ENCODE measurements at regions of chr22 and their contacts with region 1.

Region 1: DNA sequence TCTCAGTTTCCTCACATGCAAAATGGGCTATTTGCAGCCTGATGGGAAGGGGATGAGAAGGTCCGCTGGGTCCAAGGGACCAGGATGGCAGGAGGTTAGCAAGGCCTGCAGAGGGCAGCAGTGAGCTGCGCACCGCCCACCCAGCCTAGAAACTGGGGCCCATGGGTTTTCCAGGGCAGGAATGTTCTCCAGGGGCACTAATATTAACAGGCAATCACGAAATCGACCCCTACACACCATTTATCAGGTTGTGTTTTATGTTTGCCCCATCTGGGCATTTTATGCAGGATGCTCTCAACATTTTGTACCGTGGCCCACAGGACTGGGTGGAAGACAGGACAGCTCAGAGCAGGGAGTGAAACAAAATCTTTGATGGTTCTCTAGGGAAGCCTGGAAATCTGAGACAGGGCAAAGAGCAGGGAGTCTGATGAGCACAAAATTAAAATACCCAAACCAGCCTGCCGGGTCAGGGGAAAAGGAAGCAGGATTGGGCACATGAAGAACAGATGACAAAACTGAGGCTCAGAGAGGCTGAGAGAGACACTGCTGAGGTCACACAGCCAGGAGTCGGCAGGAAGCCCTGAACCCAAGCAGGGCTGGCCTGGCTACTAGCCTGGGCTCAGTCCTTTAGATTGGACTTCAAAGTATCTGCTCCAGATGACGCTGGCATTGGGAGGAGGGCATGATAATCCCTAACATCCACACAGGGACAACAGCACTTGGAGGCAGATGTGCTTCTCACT is 1.6 kb upstream of the BCR start:
- DNase-seq: peak; percentile 74
- H3K4me3 Mint-ChIP-seq: peak overlapping the region; percentile 78
- H3K27ac Mint-ChIP-seq: no peak overlapping the region
- H3K4me1 Mint-ChIP-seq: peaks cover 60% of the 10 kb centered on the region
- H3K27me3 Mint-ChIP-seq: peaks cover 19% of the 10 kb centered on the region

Region 2: DNA sequence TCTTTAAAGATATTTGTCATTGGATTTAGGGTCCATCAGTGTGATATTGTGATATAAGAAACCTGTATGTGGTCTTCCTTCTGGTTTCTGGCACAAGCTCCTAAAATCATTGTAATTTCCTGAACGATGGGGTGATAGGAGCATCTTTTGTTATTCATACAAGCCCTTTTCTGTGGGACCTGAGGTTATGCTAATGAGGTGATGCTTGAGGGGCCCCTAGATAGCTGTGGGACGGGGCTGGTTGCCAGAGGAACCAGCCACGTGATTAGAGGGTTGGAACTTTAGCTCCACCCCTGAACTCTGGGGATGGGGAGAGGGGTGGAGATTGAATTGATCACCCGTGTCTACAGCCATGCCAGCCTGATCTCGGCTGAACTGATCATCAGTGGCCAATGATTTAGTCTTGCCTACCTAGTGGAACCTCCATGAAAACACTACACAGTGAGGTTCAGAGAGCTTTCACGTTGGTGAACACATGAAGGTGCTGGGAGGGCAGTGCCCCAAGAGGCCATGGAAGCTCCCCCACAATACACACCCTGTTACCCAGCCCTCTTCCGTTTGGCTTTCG is 64.4 kb after region 1 on chr22:
- CTCF ChIA-PET with region 1: interaction called, 12 read pairs
- DNase-seq: peak; percentile 78
- H3K4me3 Mint-ChIP-seq: peak overlapping the region; percentile 33
- H3K27ac Mint-ChIP-seq: peak overlapping the region; percentile 90
- H3K4me1 Mint-ChIP-seq: peaks cover 83% of the 10 kb centered on the region
- H3K27me3 Mint-ChIP-seq: no peaks in the 10 kb centered on the region

Region 3: DNA sequence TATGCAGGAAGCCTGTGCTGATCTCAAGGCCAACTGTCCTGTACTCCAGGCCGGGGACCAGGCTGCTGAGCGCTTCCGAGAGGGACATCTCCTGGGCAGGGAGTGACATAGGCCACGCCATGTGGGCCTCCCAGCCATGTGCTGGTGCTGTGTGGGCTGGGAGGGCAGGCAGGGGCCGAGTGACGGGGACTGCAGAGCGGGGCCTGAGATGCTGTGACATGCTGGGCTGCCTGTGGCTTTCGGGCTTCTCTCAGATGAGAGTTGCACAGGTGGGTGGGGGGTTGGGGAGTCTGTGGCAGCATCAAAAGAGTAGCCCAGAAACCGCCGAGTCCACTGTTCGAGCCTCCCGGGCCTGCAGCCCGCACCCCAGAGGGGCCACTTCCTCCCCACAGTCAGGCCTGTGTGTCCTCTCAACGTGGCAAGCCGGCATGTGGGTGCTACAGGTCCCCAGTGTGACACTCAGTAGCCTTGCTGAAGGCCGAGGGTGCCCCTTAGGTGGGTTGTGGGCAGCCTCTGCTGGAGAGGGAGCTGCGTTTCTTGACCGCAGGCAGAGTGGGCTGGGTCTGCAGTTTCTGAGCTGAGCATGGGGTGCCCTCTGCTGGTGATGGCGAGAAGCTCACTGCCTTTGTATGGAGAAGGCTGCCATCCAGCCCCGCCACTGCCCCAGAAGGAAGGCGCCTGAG is 102.9 kb after region 1 on chr22:
- CTCF ChIA-PET with region 1: interaction called, 247 read pairs
- DNase-seq: peak; percentile 89
- H3K4me3 Mint-ChIP-seq: no peak overlapping the region
- H3K27ac Mint-ChIP-seq: no peak overlapping the region
- H3K4me1 Mint-ChIP-seq: peaks cover 23% of the 10 kb centered on the region
- H3K27me3 Mint-ChIP-seq: no peaks in the 10 kb centered on the region

Region 4: GRCh38 chr22:23289851-23290724 is 111.4 kb after region 1 on chr22:
- CTCF ChIA-PET with region 1: interaction called, 247 read pairs
- DNase-seq: peak; percentile 71
- H3K4me3 Mint-ChIP-seq: no peak overlapping the region
- H3K27ac Mint-ChIP-seq: peak overlapping the region; percentile 52
- H3K4me1 Mint-ChIP-seq: no peaks in the 10 kb centered on the region
- H3K27me3 Mint-ChIP-seq: no peaks in the 10 kb centered on the region

Region 5: DNA sequence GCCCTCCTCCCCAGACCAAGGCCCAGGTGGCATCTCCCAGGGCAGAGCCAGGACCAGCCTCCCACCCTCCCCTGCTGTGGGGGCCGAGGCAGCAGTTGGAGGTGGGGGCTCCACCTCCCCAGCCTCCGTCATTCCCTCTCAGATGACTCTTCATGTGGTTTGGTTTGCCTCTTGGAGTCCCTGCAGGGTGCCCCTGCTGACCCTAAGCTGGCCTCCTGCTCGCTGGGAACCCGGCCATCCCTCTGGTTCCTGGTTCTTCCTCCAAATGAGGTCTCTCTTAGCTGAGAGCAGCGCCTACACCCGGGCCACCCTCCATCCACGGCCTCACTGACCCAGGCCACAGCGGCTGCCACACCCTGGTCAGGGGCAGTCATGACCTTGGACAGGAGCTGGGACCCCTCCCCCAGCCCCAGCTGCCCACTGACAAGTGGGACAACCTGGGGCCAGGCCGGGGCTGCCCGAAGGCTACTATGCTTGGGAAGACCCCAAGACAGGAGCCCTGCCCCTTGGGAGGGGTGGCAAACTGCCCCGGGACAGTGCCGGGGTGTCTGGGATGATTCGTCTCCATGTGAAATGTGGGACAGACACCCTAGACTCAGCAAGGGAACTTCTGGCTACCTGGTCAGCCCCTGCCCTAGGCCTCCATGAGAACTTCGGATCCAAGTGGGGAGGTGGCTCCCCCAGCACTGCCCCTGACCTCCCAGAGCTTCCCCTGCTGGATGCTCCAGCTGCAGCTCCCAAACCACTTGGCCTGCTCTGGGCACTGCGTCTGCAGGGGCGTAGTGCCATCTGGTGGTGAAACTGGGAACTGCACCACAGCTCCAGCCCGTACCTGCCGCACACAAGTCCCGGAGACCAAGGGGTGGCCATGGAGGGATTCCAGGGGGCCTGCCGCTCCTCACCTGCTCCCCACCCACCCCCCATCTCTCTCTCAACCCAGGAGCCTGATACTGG is 206.9 kb after region 1 on chr22:
- CTCF ChIA-PET with region 1: interaction called, 14 read pairs
- DNase-seq: peak; percentile 88
- H3K4me3 Mint-ChIP-seq: no peak overlapping the region
- H3K27ac Mint-ChIP-seq: peak overlapping the region; percentile 45
- H3K4me1 Mint-ChIP-seq: no peaks in the 10 kb centered on the region
- H3K27me3 Mint-ChIP-seq: peaks cover 11% of the 10 kb centered on the region